IMR-90 (cell line): ENCODE measurements at regions of chr12 and their contacts with region 1.

Region 1: DNA sequence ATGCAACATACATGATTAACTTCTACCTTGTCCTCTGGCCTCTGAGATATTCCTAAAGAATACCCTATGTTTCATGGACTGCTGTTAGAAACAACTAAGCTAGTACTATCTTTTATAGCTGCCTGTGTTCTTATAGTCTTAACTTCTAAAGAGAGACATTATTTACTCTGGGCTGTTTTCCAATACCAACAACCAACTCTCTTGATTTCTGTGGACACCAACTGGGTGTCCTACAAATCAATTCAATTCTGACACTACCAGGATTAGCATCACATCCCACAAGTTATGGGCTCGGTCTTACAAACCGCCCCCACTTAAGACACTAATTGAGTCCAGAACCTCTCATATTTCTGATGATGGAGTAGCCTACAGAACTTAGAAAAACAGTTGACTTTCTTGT is 8.3 kb downstream of the XPOT start:
- DNase-seq: no peak
- ATAC-seq: peak; percentile 10; the same call in 1 of the 2 replicates
- H3K4me3 ChIP-seq: no peak overlapping the region
- H3K27ac ChIP-seq: no peak overlapping the region
- H3K4me1 ChIP-seq: peaks cover 7% of the 10 kb centered on the region
- H3K27me3 ChIP-seq: no peaks in the 10 kb centered on the region
- CTCF ChIP-seq: no peak
- POLR2A ChIP-seq: no peak
- RAD21 ChIP-seq: no peak

Region 2: GRCh38 chr12:64445490-64445889 is 33.0 kb after region 1 on chr12:
- CTCF ChIA-PET with region 1: no interaction called
- POLR2A ChIA-PET with region 1: no interaction called
- dilution Hi-C with region 1: no loop called
- in situ Hi-C with region 1: loop called (anchors 5 kb)
- intact Hi-C with region 1: loop called (anchors 5 kb)
- DNase-seq: no peak
- ATAC-seq: no peak
- H3K4me3 ChIP-seq: no peak overlapping the region
- H3K27ac ChIP-seq: no peak overlapping the region
- H3K4me1 ChIP-seq: peaks cover 2% of the 10 kb centered on the region; the same call in 1 of the 2 replicates
- H3K27me3 ChIP-seq: no peaks in the 10 kb centered on the region
- CTCF ChIP-seq: no peak
- POLR2A ChIP-seq: no peak
- RAD21 ChIP-seq: no peak

Region 3: GRCh38 chr12:64696080-64696741 is 283.8 kb after region 1 on chr12:
- CTCF ChIA-PET with region 1: no interaction called
- POLR2A ChIA-PET with region 1: no interaction called
- dilution Hi-C with region 1: no loop called
- in situ Hi-C with region 1: no loop called
- intact Hi-C with region 1: no loop called
- DNase-seq: peak; percentile 43
- ATAC-seq: peak; percentile 15; the same call in 1 of the 2 replicates
- H3K4me3 ChIP-seq: no peak overlapping the region
- H3K27ac ChIP-seq: no peak overlapping the region
- H3K4me1 ChIP-seq: peaks cover 3% of the 10 kb centered on the region
- H3K27me3 ChIP-seq: no peaks in the 10 kb centered on the region
- CTCF ChIP-seq: peak; percentile 54
- POLR2A ChIP-seq: no peak
- RAD21 ChIP-seq: peak; percentile 63